GM12878 (cell line): ENCODE measurements at regions of chr5 and their contacts with region 1.

Region 1: GRCh38 chr5:138035605-138036537 is 3.0 kb upstream of the FAM13B start:
- DNase-seq: peak; percentile 63
- ATAC-seq: peak; percentile 56
- H3K4me3 ChIP-seq: no peak overlapping the region
- H3K27ac ChIP-seq: no peak overlapping the region
- H3K4me1 ChIP-seq: peaks cover 22% of the 10 kb centered on the region
- H3K27me3 ChIP-seq: no peaks in the 10 kb centered on the region
- CTCF ChIP-seq: peak; percentile 74 to 99 (median 96)
- EP300 ChIP-seq: no peak
- POLR2A ChIP-seq: no peak
- RAD21 ChIP-seq: peak; percentile 69

Region 2: GRCh38 chr5:137888857-137889759 is 146.8 kb before region 1 on chr5 and contains the start of gene PKD2L2:
- CTCF ChIA-PET with region 1: interaction called, 28 read pairs
- POLR2A ChIA-PET with region 1: interaction called, 10 read pairs
- RAD21 ChIA-PET with region 1: interaction called, 29 read pairs
- SMC1A ChIA-PET with region 1: interaction called, 32 read pairs
- in situ Hi-C with region 1: no loop called
- intact Hi-C with region 1: loop called (anchors 5 kb)
- DNase-seq: peak; percentile 75
- ATAC-seq: peak; percentile 99
- H3K4me3 ChIP-seq: peak within 1 kb of the TSS; percentile 79
- H3K27ac ChIP-seq: peak within 1 kb of the TSS; percentile 84
- H3K4me1 ChIP-seq: no peaks in the 10 kb centered on the region
- H3K27me3 ChIP-seq: no peaks in the 10 kb centered on the region
- CTCF ChIP-seq: peak in 2 of 3 experiments; percentile 7 to 12; a peak in 1 of 6 replicates
- EP300 ChIP-seq: 0 out of 4 replicates have a peak, but pooled peaks of 1 of the 2 experiments have one; percentile 26
- POLR2A ChIP-seq: peak; percentile 99
- RAD21 ChIP-seq: no peak
- polyA plus RNA-seq, gene PKD2L2: 0.11 to 0.16 TPM

Region 3: DNA sequence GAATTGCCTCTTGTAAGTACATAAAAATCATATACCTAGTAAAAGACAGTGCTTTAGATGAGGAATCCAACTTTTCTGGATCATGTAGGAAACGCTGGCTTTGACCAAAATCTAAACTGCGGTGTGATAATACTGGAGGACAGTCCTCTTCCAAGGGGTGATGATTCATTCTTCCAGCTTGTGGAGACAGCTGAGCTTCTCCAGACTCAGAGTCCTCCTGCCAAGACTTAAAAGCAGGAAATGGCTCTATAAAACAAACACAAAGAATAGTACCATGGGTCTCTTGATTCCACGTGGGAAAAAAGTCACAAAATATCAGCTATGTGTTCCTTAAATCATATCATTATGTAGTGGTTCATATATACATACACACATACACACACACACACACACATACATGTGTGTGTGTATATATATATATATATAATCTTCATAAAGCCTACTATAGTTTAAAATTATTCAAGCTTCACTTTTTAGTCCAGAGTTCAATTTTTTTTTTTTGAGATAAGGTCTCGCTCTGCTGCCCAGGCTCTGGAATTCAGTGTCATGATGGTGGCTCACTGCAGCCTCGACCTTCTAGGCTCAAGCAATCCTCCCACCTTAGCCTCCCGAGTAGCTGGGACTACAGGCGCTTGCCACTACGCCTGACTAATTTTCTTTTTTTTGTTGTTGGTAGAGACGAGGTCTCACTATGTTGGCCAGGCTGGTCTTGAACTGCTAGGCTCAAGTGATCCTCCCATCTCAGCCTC is 81.6 kb before region 1 on chr5:
- CTCF ChIA-PET with region 1: no interaction called
- POLR2A ChIA-PET with region 1: no interaction called
- RAD21 ChIA-PET with region 1: no interaction called
- SMC1A ChIA-PET with region 1: no interaction called
- in situ Hi-C with region 1: no loop called
- intact Hi-C with region 1: no loop called
- DNase-seq: no peak
- ATAC-seq: no peak
- H3K4me3 ChIP-seq: no peak overlapping the region
- H3K27ac ChIP-seq: no peak overlapping the region
- H3K4me1 ChIP-seq: no peaks in the 10 kb centered on the region
- H3K27me3 ChIP-seq: no peaks in the 10 kb centered on the region
- CTCF ChIP-seq: no peak
- EP300 ChIP-seq: no peak
- POLR2A ChIP-seq: no peak
- RAD21 ChIP-seq: no peak

Region 4: DNA sequence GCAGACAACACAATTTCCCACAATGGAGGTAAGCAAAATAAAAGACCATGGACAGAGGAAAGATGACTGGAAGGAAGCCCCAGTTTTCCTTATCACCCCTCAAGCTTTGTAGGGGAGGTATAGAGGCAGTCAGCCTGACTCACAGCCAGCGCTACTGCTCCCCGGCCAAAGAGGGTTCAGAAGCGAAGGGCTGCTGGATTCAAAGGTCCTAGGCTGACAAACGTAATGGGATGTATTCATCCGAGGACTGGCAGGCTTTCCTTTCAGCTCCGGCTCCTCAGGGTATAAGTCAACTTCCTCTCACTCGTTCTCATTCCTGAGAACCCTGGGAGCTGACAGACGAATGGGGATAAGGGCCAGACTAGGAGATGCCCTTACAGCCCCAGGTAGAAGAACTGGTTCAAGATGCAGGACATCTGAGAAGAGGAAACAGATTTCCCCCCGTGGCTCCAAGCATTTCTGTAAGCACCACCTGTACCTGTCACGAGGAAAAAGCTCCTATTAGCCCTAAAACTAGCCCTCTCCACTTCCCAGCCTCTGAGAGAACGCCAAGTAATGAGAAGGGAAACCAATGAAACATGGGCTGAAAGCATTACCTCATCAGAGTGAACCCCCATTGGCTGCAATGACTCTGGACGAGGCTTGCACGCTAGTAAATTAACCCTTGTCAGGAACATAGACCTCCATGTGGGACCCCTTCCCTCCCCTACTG is 19.1 kb after region 1 on chr5:
- CTCF ChIA-PET with region 1: interaction called, 398 read pairs
- POLR2A ChIA-PET with region 1: interaction called, 4 read pairs
- RAD21 ChIA-PET with region 1: interaction called, 4 read pairs
- SMC1A ChIA-PET with region 1: interaction called, 10 read pairs
- in situ Hi-C with region 1: no loop called
- intact Hi-C with region 1: no loop called
- DNase-seq: no peak
- ATAC-seq: no peak
- H3K4me3 ChIP-seq: no peak overlapping the region
- H3K27ac ChIP-seq: no peak overlapping the region
- H3K4me1 ChIP-seq: no peaks in the 10 kb centered on the region
- H3K27me3 ChIP-seq: no peaks in the 10 kb centered on the region
- CTCF ChIP-seq: no peak
- EP300 ChIP-seq: no peak
- POLR2A ChIP-seq: no peak
- RAD21 ChIP-seq: no peak

Region 5: GRCh38 chr5:138077065-138077696 is 41.3 kb after region 1 on chr5:
- CTCF ChIA-PET with region 1: interaction called, 66 read pairs
- POLR2A ChIA-PET with region 1: interaction called, 3 read pairs
- RAD21 ChIA-PET with region 1: interaction called, 11 read pairs
- SMC1A ChIA-PET with region 1: interaction called, 13 read pairs
- in situ Hi-C with region 1: no loop called
- intact Hi-C with region 1: no loop called
- DNase-seq: no peak
- ATAC-seq: peak; percentile 59
- H3K4me3 ChIP-seq: no peak overlapping the region
- H3K27ac ChIP-seq: no peak overlapping the region
- H3K4me1 ChIP-seq: peaks cover 7% of the 10 kb centered on the region
- H3K27me3 ChIP-seq: no peaks in the 10 kb centered on the region
- CTCF ChIP-seq: peak; percentile 75 to 92 (median 79)
- EP300 ChIP-seq: no peak
- POLR2A ChIP-seq: no peak
- RAD21 ChIP-seq: peak; percentile 89

Region 6: GRCh38 chr5:138305797-138306196 is 269.9 kb after region 1 on chr5:
- CTCF ChIA-PET with region 1: no interaction called
- POLR2A ChIA-PET with region 1: interaction called, 12 read pairs
- RAD21 ChIA-PET with region 1: no interaction called
- SMC1A ChIA-PET with region 1: no interaction called
- in situ Hi-C with region 1: no loop called
- intact Hi-C with region 1: no loop called
- DNase-seq: no peak
- ATAC-seq: no peak
- H3K4me3 ChIP-seq: no peak overlapping the region
- H3K27ac ChIP-seq: no peak overlapping the region
- H3K4me1 ChIP-seq: no peaks in the 10 kb centered on the region
- H3K27me3 ChIP-seq: no peaks in the 10 kb centered on the region
- CTCF ChIP-seq: no peak
- EP300 ChIP-seq: no peak
- POLR2A ChIP-seq: no peak
- RAD21 ChIP-seq: no peak